Activated naive CD4-positive, alpha-beta T cell treated with anti-CD3 and anti-CD28 coated beads for 36 hours (primary cell): ENCODE measurements at regions of chrX and their contacts with region 1.

Region 1: GRCh38 chrX:8815464-8816065 is 14.4 kb upstream of the FAM9A start:
- DNase-seq: peak; percentile 8
- H3K4me3 Mint-ChIP-seq: no peak overlapping the region
- H3K27ac Mint-ChIP-seq: no peak overlapping the region
- H3K4me1 Mint-ChIP-seq: no peaks in the 10 kb centered on the region
- H3K27me3 Mint-ChIP-seq: no peaks in the 10 kb centered on the region

Region 2: GRCh38 chrX:8201896-8202331 is 613.7 kb before region 1 on chrX:
- CTCF ChIA-PET with region 1: no interaction called
- intact Hi-C with region 1: no loop called
- DNase-seq: no peak
- H3K4me3 Mint-ChIP-seq: no peak overlapping the region
- H3K27ac Mint-ChIP-seq: no peak overlapping the region
- H3K4me1 Mint-ChIP-seq: no peaks in the 10 kb centered on the region
- H3K27me3 Mint-ChIP-seq: no peaks in the 10 kb centered on the region

Region 3: DNA sequence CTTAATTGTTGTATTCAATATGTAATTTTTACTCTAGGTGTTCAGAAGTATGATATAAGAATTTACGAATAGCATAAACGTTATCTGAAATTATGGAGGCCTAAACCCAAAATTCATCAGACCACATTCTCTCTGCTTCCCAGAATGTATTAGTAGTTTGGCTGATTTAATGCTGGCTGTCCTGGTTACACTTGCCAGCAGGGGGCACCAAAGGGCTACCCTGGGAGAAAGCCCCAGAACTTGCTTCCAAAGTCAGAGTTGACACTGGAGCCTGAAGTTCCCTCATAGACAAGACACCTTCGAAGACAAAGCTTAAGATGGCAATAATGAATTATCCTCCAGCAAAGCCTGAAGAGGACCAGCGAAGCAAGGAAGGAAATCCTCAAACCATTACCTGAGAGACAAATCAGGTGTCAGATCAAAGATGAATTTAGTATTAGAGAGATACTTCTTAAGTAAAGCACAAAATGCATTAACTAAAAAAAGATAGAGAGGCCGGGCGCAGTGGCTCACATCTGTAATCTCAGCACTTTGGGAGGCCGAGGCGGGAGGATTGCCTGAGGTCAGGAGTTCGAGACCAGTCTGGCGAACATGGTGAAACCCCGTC is 72.3 kb before region 1 on chrX:
- CTCF ChIA-PET with region 1: interaction called, 6 read pairs
- intact Hi-C with region 1: loop called (anchors 1 kb)
- DNase-seq: peak; percentile 66
- H3K4me3 Mint-ChIP-seq: no peak overlapping the region
- H3K27ac Mint-ChIP-seq: no peak overlapping the region
- H3K4me1 Mint-ChIP-seq: no peaks in the 10 kb centered on the region
- H3K27me3 Mint-ChIP-seq: peaks cover 3% of the 10 kb centered on the region

Region 4: DNA sequence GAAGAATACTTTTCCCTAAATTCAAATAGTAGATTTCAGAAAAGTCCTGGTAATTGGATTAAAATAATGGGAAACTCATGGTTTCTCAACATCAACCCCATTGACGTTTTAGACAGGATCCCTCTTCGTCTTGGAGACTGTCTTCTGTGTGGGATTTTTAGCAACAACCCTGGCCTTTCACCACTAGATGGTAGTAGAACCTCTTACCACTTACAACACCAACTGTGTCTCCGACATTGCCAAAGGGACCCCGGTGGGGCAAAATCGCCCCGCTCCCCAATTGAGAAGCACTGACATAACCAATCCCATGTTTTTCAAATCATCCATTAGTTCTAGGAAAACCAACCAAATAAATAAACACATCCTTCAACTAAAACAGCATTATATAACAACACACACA is 66.7 kb before region 1 on chrX:
- CTCF ChIA-PET with region 1: interaction called, 6 read pairs
- intact Hi-C with region 1: loop called (anchors 1 kb)
- DNase-seq: peak; percentile 9
- H3K4me3 Mint-ChIP-seq: no peak overlapping the region
- H3K27ac Mint-ChIP-seq: no peak overlapping the region
- H3K4me1 Mint-ChIP-seq: no peaks in the 10 kb centered on the region
- H3K27me3 Mint-ChIP-seq: peaks cover 7% of the 10 kb centered on the region

Region 5: GRCh38 chrX:8783100-8784098 is 32.2 kb before region 1 on chrX:
- CTCF ChIA-PET with region 1: interaction called, 5 read pairs
- intact Hi-C with region 1: loop called (anchors 2 kb)
- DNase-seq: peak; percentile 14
- H3K4me3 Mint-ChIP-seq: no peak overlapping the region
- H3K27ac Mint-ChIP-seq: no peak overlapping the region
- H3K4me1 Mint-ChIP-seq: peaks cover 2% of the 10 kb centered on the region
- H3K27me3 Mint-ChIP-seq: no peaks in the 10 kb centered on the region

Region 6: DNA sequence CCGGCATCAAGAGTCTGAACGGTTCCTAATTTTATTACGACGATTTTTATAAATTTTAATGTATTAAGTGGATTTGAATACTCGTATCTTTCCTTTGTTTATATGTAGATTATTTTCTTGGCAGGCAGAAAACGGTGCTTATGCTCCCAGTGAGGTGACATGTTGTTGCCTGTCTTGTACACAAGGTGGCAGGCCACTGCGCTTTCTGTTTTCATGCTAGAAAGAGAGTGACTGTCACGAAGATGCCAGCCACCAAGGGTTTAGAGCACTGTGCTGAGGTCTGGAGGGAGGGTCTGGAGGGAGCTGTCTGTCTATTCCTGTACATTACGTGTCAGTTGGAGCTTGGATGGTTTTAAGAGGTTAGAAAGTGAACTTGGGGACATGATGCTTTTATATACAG is 1058.4 kb after region 1 on chrX:
- CTCF ChIA-PET with region 1: interaction called, 4 read pairs
- intact Hi-C with region 1: loop called (anchors 5 kb)
- DNase-seq: peak; percentile 62
- H3K4me3 Mint-ChIP-seq: no peak overlapping the region
- H3K27ac Mint-ChIP-seq: no peak overlapping the region
- H3K4me1 Mint-ChIP-seq: peaks cover 13% of the 10 kb centered on the region
- H3K27me3 Mint-ChIP-seq: peaks cover 3% of the 10 kb centered on the region